HEK293T (cell line): ENCODE measurements at regions of chr13 and their contacts with region 1.

Region 1: DNA sequence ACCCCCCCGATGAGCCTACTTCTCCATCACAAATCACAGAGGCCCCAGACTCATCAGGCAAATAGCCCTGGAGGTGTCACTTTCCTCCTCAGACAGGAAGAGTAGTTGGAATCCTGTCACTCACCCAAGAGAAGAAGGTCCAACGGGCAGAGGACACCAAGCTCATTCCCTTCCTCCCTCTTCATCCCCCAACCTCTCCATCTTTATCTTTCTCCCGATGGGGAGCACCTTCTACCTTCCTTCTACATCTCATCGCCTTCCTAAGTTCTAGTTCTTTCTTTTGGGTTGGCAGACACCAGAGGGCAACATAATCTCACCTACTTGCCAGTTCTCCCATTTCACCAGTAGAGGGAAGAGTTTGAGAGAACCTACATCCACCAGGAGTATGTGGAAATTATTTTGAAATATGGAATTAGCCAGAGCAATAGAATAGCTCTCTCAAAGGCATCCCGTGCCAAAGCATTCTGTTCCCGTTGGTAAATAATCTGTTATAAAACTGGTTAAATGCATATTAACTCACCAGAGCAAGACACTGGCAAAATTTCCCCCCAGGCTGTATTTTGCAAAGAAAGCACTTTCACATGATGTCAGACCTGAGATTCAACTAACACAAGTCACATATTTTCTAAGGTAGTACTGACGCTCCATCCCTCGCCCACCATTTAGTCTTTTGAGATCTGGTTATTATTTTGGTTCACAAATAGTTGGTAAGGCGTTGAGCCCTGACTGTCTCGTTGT is 55.0 kb downstream of the ZIC5 start:
- DNase-seq: peak; percentile 67

Region 2: GRCh38 chr13:99855526-99856420 is 60.8 kb before region 1 on chr13:
- CTCF ChIA-PET with region 1: no interaction called
- POLR2A ChIA-PET with region 1: no interaction called
- DNase-seq: no peak

Region 3: DNA sequence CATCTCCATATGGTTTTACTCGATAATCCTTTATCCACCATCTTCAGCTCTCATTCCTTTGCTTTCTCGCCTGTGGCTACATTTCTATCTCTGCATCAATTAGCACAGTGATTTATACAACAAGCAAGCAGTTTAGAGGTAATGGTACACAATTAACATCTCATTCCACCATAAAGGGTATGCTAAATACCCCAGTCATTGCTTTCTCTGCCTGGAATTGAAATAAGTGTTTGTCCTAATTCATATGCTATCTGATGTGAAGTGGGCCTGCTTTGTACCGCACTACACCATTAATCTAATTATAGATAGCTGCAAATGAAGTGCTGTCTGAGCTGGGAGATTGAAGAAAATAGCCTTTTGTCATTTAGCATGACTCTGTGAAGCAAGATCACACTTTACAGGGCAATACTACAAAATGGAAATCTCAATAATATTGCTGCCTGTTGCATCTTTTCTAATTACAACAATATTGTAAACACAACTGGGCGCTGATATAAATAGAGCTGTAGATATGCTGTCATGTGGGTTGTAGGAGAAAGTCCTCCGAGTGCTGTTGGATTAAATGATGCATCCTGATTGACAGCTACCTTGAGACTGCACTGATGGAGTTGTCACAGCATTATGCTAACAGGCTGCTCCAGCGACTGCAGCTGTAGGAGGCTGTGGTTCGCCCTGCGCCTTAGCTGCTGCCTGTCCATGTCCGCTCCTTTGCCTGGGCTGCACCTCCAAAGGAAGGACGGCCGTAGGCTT is 593.8 kb after region 1 on chr13:
- CTCF ChIA-PET with region 1: interaction called, 12 read pairs
- POLR2A ChIA-PET with region 1: no interaction called
- DNase-seq: no peak